Heart left ventricle (tissue), 16 donors: ENCODE measurements at regions of chr9 and their contacts with region 1.

Region 1: GRCh38 chr9:70352802-70353201 is 61.7 kb downstream of the KLF9 start:
- DNase-seq: no peak
- ATAC-seq: no peak
- H3K4me3 ChIP-seq: no peak overlapping the region
- H3K27ac ChIP-seq: peak overlapping the region in 2 of 12 donors; percentile 11 to 40
- H3K4me1 ChIP-seq: peaks cover 0 to 15% (median 10%) of the 10 kb centered on the region in 12 donors
- H3K27me3 ChIP-seq: no peaks in the 10 kb centered on the region
- CTCF ChIP-seq: peak; percentile 46 to 88 (median 78)
- POLR2A ChIP-seq: no peak

Region 2: DNA sequence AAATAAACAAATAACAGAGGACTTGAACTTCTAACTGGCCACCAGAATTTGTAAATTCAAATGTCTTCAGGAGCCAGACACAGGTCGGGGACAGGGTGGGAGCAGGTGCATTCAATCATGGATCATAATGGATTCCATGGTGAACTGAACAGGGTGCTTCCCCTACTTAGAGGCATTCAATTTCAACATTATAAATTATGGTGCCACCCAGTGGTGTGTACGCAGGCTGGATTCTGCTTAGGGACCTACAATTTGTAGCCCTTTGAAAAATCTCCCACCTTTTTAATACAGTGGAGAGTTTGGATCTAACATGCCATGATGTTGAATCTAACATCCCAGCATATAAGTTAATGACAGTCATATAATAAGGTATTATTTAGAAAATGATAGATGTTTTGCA is 39.4 kb after region 1 on chr9:
- intact Hi-C with region 1: loop called in 5 of 10 experiments (anchors 5 to 10 kb)
- DNase-seq: no peak
- ATAC-seq: peak in 3 of 4 donors; percentile 25 to 34 (median 27)
- H3K4me3 ChIP-seq: no peak overlapping the region
- H3K27ac ChIP-seq: peak overlapping the region in 11 of 12 donors; percentile 1 to 71 (median 44)
- H3K4me1 ChIP-seq: peaks cover 50 to 97% (median 77%) of the 10 kb centered on the region in 12 donors
- H3K27me3 ChIP-seq: no peaks in the 10 kb centered on the region
- CTCF ChIP-seq: peak in 8 of 12 donors; percentile 11 to 45 (median 26)
- POLR2A ChIP-seq: no peak

Region 3: DNA sequence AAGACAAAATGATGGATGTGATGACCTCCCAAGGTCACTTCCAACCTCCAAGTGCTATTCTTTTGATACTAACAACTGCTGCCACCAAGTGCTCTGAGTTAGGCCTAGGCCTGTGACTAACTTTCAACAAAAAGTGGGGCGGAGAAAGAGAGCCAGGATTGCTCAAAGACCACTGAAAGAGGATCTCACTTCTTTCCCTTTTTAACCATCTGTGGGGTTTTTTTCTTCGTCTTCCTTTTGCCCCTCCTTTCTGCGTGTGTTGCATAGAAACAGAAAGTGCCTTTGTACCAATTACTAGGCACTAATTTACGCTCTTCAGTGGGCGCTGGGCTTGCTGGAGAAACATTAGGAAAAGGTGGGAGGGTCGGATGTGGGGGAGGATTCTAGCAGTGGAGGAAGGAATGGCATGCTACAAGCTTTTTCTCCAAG is 53.6 kb after region 1 on chr9:
- intact Hi-C with region 1: loop called in 6 of 10 experiments (anchors 5 kb)
- DNase-seq: no peak
- ATAC-seq: peak in 1 of 4 donors; percentile 21
- H3K4me3 ChIP-seq: peak overlapping the region in 6 of 12 donors; percentile 8 to 35 (median 17)
- H3K27ac ChIP-seq: peak overlapping the region; percentile 45 to 86 (median 71)
- H3K4me1 ChIP-seq: peaks cover 21 to 96% (median 88%) of the 10 kb centered on the region in 12 donors
- H3K27me3 ChIP-seq: no peaks in the 10 kb centered on the region
- CTCF ChIP-seq: no peak
- POLR2A ChIP-seq: no peak

Region 4: GRCh38 chr9:70413798-70414775 is 61.3 kb after region 1 on chr9 and contains the start of gene KLF9:
- intact Hi-C with region 1: loop called in 6 of 10 experiments (anchors 5 kb)
- DNase-seq: peak; percentile 93 to 97 (median 95)
- ATAC-seq: peak; percentile 77 to 82 (median 80)
- H3K4me3 ChIP-seq: peak within 1 kb of the TSS; percentile 76 to 99 (median 90)
- H3K27ac ChIP-seq: peak within 1 kb of the TSS; percentile 98 to 100 (median 100)
- H3K4me1 ChIP-seq: peaks cover 10 to 64% (median 53%) of the 10 kb centered on the region in 12 donors
- H3K27me3 ChIP-seq: no peaks in the 10 kb centered on the region
- CTCF ChIP-seq: no peak
- POLR2A ChIP-seq: peak; percentile 48 to 97
- total RNA-seq, gene KLF9: 28.7 to 74.8 (median 46.0) TPM

Region 5: DNA sequence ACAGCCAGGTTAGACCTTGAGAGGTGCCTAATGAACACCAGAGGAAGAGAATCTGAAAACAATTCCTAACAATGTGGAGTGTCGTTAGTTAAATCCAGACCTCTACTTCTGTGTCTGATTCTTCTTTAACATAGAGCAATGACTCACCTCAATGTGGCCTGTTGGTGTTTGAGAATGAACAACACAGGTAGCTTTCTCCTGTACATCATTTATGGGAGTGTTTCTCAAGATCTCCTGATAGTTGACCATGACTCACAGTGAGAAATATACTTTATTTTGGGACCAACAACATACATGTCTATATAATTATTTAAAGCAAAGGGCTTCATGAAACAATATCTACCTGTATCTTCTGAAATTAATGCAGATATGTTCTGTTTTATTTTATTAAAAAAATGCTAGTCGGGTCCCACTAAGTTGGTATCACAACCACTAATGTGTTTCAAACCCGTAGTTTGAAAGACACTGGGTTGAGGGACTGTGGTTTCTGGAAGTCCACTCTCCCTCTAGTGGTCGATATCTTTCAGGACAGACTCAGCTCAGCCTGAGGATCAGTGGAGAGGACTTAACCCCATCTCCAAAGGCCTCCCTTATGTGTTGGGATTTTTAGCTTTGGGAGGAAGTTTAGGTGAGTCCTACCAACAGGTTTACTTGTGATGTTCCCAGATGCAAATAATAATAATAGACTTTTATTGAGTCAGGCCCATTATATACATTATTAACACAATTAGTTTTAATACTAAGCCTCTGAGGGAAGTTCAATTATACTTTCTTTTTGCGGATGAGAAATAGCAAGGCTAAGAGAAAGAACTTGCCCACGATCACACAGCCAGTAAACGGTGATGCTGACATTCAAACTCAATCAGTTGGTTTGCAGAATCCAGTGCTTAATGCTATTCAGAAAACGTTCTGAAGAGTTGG is 131.7 kb after region 1 on chr9:
- intact Hi-C with region 1: loop called in 6 of 10 experiments (anchors 5 to 10 kb)
- DNase-seq: peak in 2 of 5 donors; percentile 48 to 56
- ATAC-seq: peak; percentile 45 to 74 (median 69)
- H3K4me3 ChIP-seq: no peak overlapping the region
- H3K27ac ChIP-seq: peak overlapping the region; percentile 14 to 95 (median 72)
- H3K4me1 ChIP-seq: peaks cover 30 to 83% (median 62%) of the 10 kb centered on the region in 12 donors
- H3K27me3 ChIP-seq: no peaks in the 10 kb centered on the region
- CTCF ChIP-seq: peak; percentile 59 to 88 (median 79)
- POLR2A ChIP-seq: no peak

Region 6: DNA sequence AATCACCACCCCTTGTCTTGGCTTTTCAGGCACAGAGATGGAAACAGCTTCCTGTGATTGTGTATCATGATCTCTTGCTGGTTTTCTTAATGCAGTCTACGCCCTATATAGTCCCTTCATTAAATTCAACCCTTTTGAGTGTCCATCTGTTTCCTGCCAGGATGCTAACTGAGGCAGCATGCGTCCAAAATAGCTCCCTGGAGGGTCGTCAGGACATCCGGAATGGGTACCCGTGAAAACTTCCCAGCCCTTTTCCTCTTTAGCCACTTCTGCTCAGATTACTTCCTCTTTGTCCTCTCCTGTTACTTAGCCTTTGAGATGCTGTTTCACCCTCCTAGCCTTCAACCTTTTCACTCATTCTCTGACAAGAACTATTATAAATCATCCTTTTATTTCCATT is 141.4 kb after region 1 on chr9:
- intact Hi-C with region 1: loop called in 9 of 10 experiments (anchors 5 to 10 kb)
- DNase-seq: peak in 2 of 5 donors; percentile 49 to 63
- ATAC-seq: peak in 3 of 4 donors; percentile 41 to 74 (median 57)
- H3K4me3 ChIP-seq: no peak overlapping the region
- H3K27ac ChIP-seq: peak overlapping the region in 10 of 12 donors; percentile 2 to 80 (median 51)
- H3K4me1 ChIP-seq: peaks cover 4 to 57% (median 34%) of the 10 kb centered on the region in 12 donors
- H3K27me3 ChIP-seq: no peaks in the 10 kb centered on the region
- CTCF ChIP-seq: no peak
- POLR2A ChIP-seq: no peak

Region 7: DNA sequence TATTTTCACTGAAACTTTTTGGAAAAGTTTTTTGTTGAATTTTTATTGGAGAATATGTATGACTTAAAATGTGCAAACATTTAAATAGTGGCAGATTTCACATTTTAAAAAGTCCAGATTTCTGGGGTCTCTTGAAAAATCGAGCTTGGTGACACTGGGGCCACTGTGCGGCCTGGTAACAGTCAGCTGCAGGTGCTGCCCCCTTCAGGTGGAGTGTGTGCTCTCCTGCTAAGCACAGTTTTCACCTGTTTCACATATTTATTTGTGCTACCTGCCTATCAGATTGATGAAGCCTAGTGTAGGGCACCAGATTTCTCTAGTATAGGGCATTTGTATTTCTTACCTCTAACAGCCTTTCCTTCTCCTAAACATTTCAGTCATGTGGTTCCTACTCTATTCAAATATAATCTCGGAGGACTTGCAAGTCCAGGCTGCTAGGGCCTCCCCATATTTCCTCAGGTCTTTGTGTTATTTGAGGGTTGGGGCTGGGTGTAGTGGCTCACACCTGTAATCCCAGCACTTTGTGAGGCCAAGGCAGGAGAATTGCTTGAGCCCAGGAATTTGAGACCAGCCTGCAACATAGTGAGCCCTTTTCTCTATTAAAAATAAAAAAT is 157.5 kb after region 1 on chr9:
- intact Hi-C with region 1: loop called in 2 of 10 experiments (anchors 5 kb)
- DNase-seq: peak in 2 of 5 donors; percentile 35 to 63
- ATAC-seq: peak in 1 of 4 donors; percentile 52
- H3K4me3 ChIP-seq: no peak overlapping the region
- H3K27ac ChIP-seq: no peak overlapping the region
- H3K4me1 ChIP-seq: peaks cover 0 to 8% (median 0%) of the 10 kb centered on the region in 12 donors
- H3K27me3 ChIP-seq: no peaks in the 10 kb centered on the region
- CTCF ChIP-seq: peak; percentile 25 to 77 (median 52)
- POLR2A ChIP-seq: no peak